CD4-positive, alpha-beta memory T cell (primary cell): ENCODE measurements at regions of chr1 and their contacts with region 1.

Region 1: DNA sequence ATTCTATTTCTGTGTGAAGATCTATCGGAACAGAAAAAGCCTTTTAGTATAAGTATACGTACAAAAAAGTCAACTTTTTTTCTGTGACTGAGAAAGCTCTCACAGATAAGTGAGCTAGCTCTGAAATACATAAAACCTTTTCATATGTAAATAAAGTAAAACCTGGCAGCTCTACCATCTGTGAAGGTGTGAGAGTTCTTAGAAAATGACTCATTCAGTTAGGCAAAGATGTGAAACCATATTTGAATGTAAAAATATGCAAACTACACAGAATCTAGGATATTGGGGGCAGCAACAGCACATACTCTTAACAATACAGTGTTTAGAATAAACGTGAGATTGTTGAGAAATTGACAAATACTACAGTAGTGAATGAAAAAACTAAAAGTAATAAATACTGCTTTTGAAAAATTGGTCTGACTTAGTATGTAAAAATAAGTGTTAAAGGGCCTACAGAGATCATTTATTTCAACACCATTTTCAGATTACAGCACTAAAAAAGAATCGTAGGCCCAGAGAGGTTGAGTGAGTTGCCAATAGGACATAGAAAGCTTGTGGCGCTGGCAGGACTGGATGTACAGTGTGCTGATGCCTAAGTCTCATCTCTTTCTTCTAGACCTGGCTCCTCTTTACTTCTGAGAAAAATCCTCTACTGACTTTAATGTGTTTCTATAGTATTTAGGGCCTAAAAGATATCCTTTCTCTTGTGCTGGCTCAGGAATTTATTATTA is 19.8 kb downstream of the ATP6V1G3 start:
- DNase-seq: peak in 4 of 5 donors; percentile 18 to 44 (median 25)
- H3K4me3 ChIP-seq: peak overlapping the region; percentile 19 to 46
- H3K4me3 Mint-ChIP-seq: peak overlapping the region; percentile 77 to 90 (median 80)
- H3K27ac ChIP-seq: peak overlapping the region; percentile 57
- H3K27ac Mint-ChIP-seq: peak overlapping the region; percentile 81 to 94 (median 91)
- H3K4me1 ChIP-seq: peaks cover 82% of the 10 kb centered on the region
- H3K4me1 Mint-ChIP-seq: peaks cover 57 to 84% (median 64%) of the 10 kb centered on the region in 4 donors
- H3K27me3 ChIP-seq: no peaks in the 10 kb centered on the region
- H3K27me3 Mint-ChIP-seq: no peaks in the 10 kb centered on the region

Region 2: DNA sequence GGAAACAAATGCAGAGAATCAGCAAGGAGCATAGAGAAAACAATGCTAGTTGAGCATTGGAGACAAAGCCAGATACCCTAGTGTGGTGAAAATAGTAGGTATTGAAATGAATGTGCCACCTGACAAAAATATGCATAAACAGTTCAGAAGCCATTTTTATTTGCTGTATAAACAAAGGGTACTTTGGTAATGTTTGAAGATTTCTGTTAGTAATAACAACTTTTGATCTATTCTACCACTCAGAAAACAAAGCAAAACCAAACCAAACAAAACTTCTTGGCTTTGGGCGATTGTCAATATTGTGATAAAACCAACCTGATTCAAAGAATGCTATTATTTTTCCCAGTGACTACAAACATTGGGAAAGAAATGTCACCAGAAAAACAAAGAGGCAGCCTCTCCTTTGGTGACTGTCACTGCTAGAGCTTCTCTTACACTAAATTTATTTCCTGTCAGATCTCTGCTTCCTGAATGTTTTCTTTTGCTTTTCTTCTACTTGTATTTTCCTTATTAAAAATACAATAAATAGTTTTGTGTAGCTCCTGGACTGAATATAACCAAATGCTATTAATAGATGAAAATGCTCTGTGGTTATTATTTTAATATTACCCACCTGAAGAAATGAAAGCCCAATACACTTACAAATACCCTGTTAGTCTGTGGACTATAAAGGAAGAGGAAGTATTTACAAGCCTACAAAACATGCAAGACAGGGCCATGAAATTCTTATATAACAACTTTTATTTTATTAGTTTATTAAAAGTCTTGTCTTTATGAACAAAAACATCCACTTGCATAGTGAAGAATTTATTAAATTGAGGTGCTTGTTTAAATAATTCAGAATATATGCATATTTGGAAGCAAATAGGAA is 14.1 kb after region 1 on chr1:
- CTCF ChIA-PET with region 1: interaction called, 4 read pairs
- POLR2A ChIA-PET with region 1: interaction called, 17 read pairs
- intact Hi-C with region 1: no loop called
- DNase-seq: no peak
- H3K4me3 ChIP-seq: peak overlapping the region in 1 of 2 donors; percentile 28
- H3K4me3 Mint-ChIP-seq: peak overlapping the region; percentile 65 to 83 (median 77)
- H3K27ac ChIP-seq: peak overlapping the region; percentile 49
- H3K27ac Mint-ChIP-seq: peak overlapping the region; percentile 29 to 90 (median 86)
- H3K4me1 ChIP-seq: peaks cover 59% of the 10 kb centered on the region
- H3K4me1 Mint-ChIP-seq: peaks cover 51 to 78% (median 61%) of the 10 kb centered on the region in 4 donors
- H3K27me3 ChIP-seq: no peaks in the 10 kb centered on the region
- H3K27me3 Mint-ChIP-seq: no peaks in the 10 kb centered on the region

Region 3: DNA sequence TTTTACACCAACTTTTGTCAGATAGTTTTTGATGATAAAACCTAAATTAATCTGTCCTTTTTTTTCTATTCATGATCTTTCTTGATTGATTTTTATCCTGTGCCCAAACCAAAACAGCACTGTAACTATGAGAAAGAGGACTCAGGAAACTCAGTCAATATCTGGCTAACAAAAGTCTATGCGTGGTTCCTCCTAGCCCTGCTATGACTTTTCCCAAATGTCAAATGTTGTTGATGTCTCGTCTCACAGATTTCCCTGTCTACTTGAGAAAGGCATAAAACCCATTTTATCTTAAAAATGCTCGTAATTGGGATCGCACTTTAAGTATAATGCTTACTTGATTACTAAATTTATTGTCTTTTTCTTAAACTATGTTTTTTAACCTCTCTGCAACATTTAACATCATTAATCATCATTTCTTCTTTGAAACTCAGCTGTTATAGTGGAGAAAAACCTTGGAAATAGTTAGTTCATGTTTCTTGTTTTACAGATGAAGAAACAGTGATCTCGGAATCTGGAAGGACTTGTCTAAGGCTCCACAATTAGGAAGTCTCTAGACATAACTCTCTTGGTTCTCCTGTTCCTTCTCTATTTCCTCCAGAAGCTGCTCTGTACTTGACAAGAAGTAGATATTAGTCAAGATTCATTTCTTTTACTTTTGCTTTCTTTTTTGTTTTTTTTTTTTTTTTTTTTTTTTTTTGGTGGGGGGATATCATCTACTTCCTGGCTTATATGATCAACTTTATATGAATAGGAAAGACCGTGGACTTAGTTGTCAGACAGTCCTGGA is 92.0 kb after region 1 on chr1:
- CTCF ChIA-PET with region 1: interaction called, 11 read pairs
- POLR2A ChIA-PET with region 1: interaction called, 10 read pairs
- intact Hi-C with region 1: no loop called
- DNase-seq: peak in 3 of 5 donors; percentile 36 to 48 (median 43)
- H3K4me3 ChIP-seq: peak overlapping the region; percentile 20 to 23
- H3K4me3 Mint-ChIP-seq: peak overlapping the region; percentile 67 to 92 (median 82)
- H3K27ac ChIP-seq: peak overlapping the region; percentile 81
- H3K27ac Mint-ChIP-seq: peak overlapping the region; percentile 92 to 99 (median 98)
- H3K4me1 ChIP-seq: peaks cover 94% of the 10 kb centered on the region
- H3K4me1 Mint-ChIP-seq: peaks cover 58 to 75% (median 64%) of the 10 kb centered on the region in 4 donors
- H3K27me3 ChIP-seq: no peaks in the 10 kb centered on the region
- H3K27me3 Mint-ChIP-seq: no peaks in the 10 kb centered on the region

Region 4: DNA sequence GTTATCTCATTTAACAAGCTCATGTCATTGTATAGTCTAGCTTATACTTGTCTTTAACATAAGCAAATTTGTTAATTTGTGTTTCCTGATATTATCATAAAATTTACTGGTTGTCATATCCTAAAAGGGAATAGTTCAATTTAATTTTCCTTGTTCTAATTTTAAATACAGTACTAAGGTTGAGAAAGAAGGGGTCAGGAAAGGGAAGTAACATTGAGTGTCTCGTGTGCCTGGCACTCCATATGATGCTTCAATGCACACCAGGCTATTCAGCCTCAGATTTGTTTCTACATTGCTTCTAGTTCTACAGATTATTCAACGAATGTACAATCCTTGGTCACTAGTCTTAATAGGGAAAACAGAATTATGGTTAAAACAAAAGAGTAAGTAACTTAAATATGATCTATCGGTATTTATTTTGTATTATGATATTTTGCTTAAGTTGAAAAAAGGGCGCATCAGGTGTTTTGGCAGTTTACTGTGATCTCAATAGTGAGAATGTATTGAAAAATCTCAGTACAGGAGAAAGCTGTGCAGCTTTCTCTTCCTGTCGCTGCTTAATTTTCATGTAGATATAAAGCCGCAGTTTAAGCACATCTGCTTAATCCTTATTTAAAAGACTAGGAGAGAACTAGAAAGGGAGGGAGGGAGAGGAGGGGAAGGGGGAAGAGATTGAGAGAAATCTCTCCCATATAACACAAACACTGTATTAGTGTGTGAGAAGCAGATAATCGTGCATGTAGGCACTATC is 131.1 kb after region 1 on chr1:
- CTCF ChIA-PET with region 1: interaction called, 11 read pairs
- POLR2A ChIA-PET with region 1: interaction called, 25 read pairs
- intact Hi-C with region 1: loop called (anchors 1 kb)
- DNase-seq: no peak
- H3K4me3 ChIP-seq: peak overlapping the region; percentile 12 to 39
- H3K4me3 Mint-ChIP-seq: peak overlapping the region; percentile 70 to 88 (median 78)
- H3K27ac ChIP-seq: peak overlapping the region; percentile 73
- H3K27ac Mint-ChIP-seq: peak overlapping the region; percentile 94 to 98 (median 96)
- H3K4me1 ChIP-seq: peaks cover 91% of the 10 kb centered on the region
- H3K4me1 Mint-ChIP-seq: peaks cover 49 to 73% (median 64%) of the 10 kb centered on the region in 4 donors
- H3K27me3 ChIP-seq: no peaks in the 10 kb centered on the region
- H3K27me3 Mint-ChIP-seq: no peaks in the 10 kb centered on the region

Region 5: GRCh38 chr1:198691063-198691462 is 170.4 kb after region 1 on chr1:
- CTCF ChIA-PET with region 1: interaction called, 26 read pairs
- POLR2A ChIA-PET with region 1: interaction called, 104 read pairs
- intact Hi-C with region 1: loop called (anchors 1 kb)
- DNase-seq: no peak
- H3K4me3 ChIP-seq: no peak overlapping the region
- H3K4me3 Mint-ChIP-seq: peak overlapping the region; percentile 3 to 78 (median 44)
- H3K27ac ChIP-seq: peak overlapping the region; percentile 42
- H3K27ac Mint-ChIP-seq: peak overlapping the region; percentile 72 to 92 (median 88)
- H3K4me1 ChIP-seq: peaks cover 90% of the 10 kb centered on the region
- H3K4me1 Mint-ChIP-seq: peaks cover 60 to 85% (median 73%) of the 10 kb centered on the region in 4 donors
- H3K27me3 ChIP-seq: no peaks in the 10 kb centered on the region
- H3K27me3 Mint-ChIP-seq: no peaks in the 10 kb centered on the region

Region 6: GRCh38 chr1:198937231-198938031 is 416.7 kb after region 1 on chr1:
- CTCF ChIA-PET with region 1: no interaction called
- POLR2A ChIA-PET with region 1: no interaction called
- intact Hi-C with region 1: loop called (anchors 10 kb)
- DNase-seq: peak; percentile 47 to 64 (median 53)
- H3K4me3 ChIP-seq: peak overlapping the region; percentile 46 to 50
- H3K4me3 Mint-ChIP-seq: peak overlapping the region in 6 of 8 donors; percentile 82 to 91 (median 87)
- H3K27ac ChIP-seq: peak overlapping the region; percentile 51
- H3K27ac Mint-ChIP-seq: peak overlapping the region in 6 of 7 donors; percentile 68 to 92 (median 86)
- H3K4me1 ChIP-seq: peaks cover 48% of the 10 kb centered on the region
- H3K4me1 Mint-ChIP-seq: peaks cover 13 to 25% (median 18%) of the 10 kb centered on the region in 4 donors
- H3K27me3 ChIP-seq: no peaks in the 10 kb centered on the region
- H3K27me3 Mint-ChIP-seq: no peaks in the 10 kb centered on the region